CD4-positive, alpha-beta T cell (primary cell): ENCODE measurements at regions of chr9 and their contacts with region 1.

Region 1: GRCh38 chr9:99140685-99141314 is 35.9 kb downstream of the TGFBR1 start:
- DNase-seq: peak; percentile 25 to 81 (median 44)
- ATAC-seq: peak; percentile 94
- H3K4me3 ChIP-seq: no peak overlapping the region
- H3K4me3 Mint-ChIP-seq: peak overlapping the region; percentile 0
- H3K27ac ChIP-seq: no peak overlapping the region
- H3K27ac Mint-ChIP-seq: peak overlapping the region; percentile 61
- H3K4me1 ChIP-seq: peaks cover 4% of the 10 kb centered on the region
- H3K4me1 Mint-ChIP-seq: peaks cover 42% of the 10 kb centered on the region
- H3K27me3 ChIP-seq: no peaks in the 10 kb centered on the region
- H3K27me3 Mint-ChIP-seq: no peaks in the 10 kb centered on the region
- CTCF ChIP-seq: peak; percentile 95

Region 2: DNA sequence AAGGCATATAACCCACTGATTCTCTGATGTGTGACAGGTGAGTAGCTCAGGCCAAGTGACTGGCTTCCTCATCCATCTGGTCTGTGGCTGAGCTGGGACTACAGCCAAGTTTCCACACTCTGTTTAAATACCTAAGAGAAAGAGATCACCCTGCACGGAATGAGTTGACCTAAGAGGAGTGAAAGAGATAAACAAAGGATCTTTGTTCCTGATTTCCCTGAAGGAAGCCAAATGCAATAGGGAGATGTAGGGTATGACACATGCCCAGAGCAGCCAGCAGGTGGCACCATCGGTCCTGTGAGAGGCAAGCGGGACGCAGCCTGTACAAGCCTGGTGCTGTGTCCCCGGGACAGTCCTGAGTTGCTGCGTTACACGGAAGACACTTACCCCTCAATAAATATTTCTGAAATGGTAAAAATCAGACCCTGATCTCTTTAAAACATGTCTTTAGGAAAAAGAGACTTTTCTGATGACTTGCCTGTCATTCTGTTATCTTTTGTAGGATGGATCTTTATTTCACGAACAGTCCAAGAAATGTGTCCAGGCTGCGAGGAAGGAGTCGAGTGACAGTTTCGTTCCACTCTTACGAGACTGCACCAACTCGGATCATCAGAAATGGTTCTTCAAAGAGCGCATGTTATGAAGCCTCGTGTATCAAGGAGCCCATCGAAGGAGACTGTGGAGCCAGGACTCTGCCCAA is 292.2 kb before region 1 on chr9:
- CTCF ChIA-PET with region 1: interaction called, 5 read pairs
- POLR2A ChIA-PET with region 1: interaction called, 3 read pairs
- intact Hi-C with region 1: loop called in 1 of 2 experiments (anchors 2 kb)
- DNase-seq: peak; percentile 58 to 83 (median 68)
- ATAC-seq: peak; percentile 84
- H3K4me3 ChIP-seq: no peak overlapping the region
- H3K4me3 Mint-ChIP-seq: no peak overlapping the region
- H3K27ac ChIP-seq: no peak overlapping the region
- H3K27ac Mint-ChIP-seq: no peak overlapping the region
- H3K4me1 ChIP-seq: no peaks in the 10 kb centered on the region
- H3K4me1 Mint-ChIP-seq: no peaks in the 10 kb centered on the region
- H3K27me3 ChIP-seq: no peaks in the 10 kb centered on the region
- H3K27me3 Mint-ChIP-seq: no peaks in the 10 kb centered on the region
- CTCF ChIP-seq: peak; percentile 97

Region 3: DNA sequence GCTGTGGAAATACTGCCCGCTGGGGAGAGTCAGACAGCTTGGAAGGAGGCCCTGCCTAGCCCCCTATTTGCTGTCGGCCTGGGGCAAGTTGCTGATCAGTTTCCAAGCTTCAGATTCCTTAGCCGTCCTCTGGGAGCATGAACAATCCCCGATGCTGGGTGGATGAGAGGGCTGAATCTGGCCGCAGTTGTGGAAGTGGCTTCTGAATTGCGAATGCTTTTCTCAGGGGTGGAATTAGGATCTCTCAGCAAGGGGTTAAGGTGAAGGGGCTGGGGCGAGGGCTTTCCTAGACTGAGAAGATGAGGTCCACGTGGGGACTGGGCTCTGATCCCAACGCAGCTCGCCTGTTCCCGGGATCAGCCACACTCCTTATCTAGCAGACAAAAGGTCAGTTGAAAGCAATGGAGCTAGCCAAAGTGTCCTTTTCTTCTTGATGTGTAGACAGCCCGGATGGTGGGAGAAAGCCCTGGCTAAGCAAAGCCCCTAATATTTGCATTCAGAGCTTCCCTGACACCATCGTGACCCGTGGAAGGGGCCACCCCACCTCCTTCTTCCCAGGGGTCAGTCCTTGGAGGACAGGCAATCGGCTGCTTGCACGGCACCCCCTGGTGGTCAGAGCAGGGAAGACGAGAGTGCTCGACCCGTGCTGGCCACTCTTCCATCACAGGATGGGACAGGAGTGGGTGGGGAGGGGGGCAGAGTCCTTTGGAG is 142.2 kb before region 1 on chr9:
- CTCF ChIA-PET with region 1: interaction called, 77 read pairs
- POLR2A ChIA-PET with region 1: interaction called, 13 read pairs
- intact Hi-C with region 1: loop called (anchors 1 kb)
- DNase-seq: peak; percentile 23 to 70 (median 42)
- ATAC-seq: peak; percentile 46
- H3K4me3 ChIP-seq: no peak overlapping the region
- H3K4me3 Mint-ChIP-seq: no peak overlapping the region
- H3K27ac ChIP-seq: no peak overlapping the region
- H3K27ac Mint-ChIP-seq: no peak overlapping the region
- H3K4me1 ChIP-seq: peaks cover 20% of the 10 kb centered on the region
- H3K4me1 Mint-ChIP-seq: peaks cover 26% of the 10 kb centered on the region
- H3K27me3 ChIP-seq: no peaks in the 10 kb centered on the region
- H3K27me3 Mint-ChIP-seq: no peaks in the 10 kb centered on the region
- CTCF ChIP-seq: peak; percentile 72

Region 4: DNA sequence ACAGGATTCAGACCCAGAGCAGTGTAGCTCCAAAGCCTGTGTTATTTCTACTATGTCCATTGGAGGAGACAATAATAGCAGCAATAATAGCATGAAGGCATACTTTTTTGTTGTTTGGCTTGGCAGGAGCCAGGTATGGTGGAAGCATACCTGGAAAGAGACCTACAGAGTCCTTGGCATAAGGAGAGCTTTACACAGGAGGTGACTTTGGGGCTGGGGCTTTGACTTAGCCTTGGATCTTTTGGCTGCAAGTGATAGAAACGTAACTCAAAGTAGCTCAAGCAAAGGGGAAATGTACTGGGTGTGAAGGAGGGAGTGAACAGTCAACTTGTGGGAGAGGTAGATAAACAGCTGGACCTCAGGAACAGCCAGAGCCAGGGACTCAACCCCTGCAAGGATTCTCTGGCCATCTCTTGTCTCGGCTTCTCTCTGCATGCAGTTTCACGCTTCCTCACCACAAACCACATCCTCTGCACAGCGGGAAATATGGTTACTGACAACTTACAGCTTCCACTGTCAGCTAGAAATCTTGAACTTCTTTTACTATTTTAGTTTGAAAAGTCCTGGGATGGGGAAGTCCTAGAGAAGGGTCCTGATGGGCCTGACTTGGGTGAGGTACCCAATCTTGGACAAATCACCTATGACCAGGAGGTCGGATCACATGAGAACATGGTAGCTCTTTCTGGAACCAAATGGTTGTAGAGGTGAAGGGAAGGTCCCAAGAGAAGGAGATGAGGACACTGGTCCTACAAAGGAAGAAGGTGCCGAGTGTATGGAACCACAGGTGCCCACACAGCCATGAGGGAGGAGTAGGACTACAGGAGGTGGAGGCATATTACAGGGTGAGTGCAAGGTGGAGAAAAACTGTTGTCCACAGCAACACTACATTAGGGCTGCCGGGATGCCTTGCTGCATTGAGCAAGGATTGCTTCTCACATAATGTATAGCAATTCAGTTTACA is 82.9 kb before region 1 on chr9:
- CTCF ChIA-PET with region 1: interaction called, 6 read pairs
- POLR2A ChIA-PET with region 1: interaction called, 34 read pairs
- intact Hi-C with region 1: loop called (anchors 1 to 5 kb)
- DNase-seq: peak; percentile 27 to 94 (median 60)
- ATAC-seq: peak; percentile 76
- H3K4me3 ChIP-seq: peak overlapping the region; percentile 47
- H3K4me3 Mint-ChIP-seq: peak overlapping the region; percentile 87
- H3K27ac ChIP-seq: peak overlapping the region in 1 of 2 donors; percentile 57
- H3K27ac Mint-ChIP-seq: peak overlapping the region; percentile 69
- H3K4me1 ChIP-seq: peaks cover 67% of the 10 kb centered on the region
- H3K4me1 Mint-ChIP-seq: peaks cover 76% of the 10 kb centered on the region
- H3K27me3 ChIP-seq: no peaks in the 10 kb centered on the region
- H3K27me3 Mint-ChIP-seq: no peaks in the 10 kb centered on the region
- CTCF ChIP-seq: no peak

Region 5: GRCh38 chr9:99118782-99119466 is 21.9 kb before region 1 on chr9:
- CTCF ChIA-PET with region 1: interaction called, 10 read pairs
- POLR2A ChIA-PET with region 1: interaction called, 53 read pairs
- intact Hi-C with region 1: no loop called
- DNase-seq: peak; percentile 21 to 88 (median 46)
- ATAC-seq: peak; percentile 99
- H3K4me3 ChIP-seq: peak overlapping the region; percentile 28
- H3K4me3 Mint-ChIP-seq: peak overlapping the region; percentile 42
- H3K27ac ChIP-seq: peak overlapping the region in 1 of 2 donors; percentile 22
- H3K27ac Mint-ChIP-seq: peak overlapping the region; percentile 70
- H3K4me1 ChIP-seq: peaks cover 32% of the 10 kb centered on the region
- H3K4me1 Mint-ChIP-seq: peaks cover 81% of the 10 kb centered on the region
- H3K27me3 ChIP-seq: no peaks in the 10 kb centered on the region
- H3K27me3 Mint-ChIP-seq: no peaks in the 10 kb centered on the region
- CTCF ChIP-seq: no peak